Calu3 (cell line): ENCODE measurements at regions of chr9 and their contacts with region 1.

Region 1: GRCh38 chr9:32378993-32379729 is 5.3 kb upstream of the ACO1 start:
- DNase-seq: peak; percentile 55
- H3K4me3 Mint-ChIP-seq: no peak overlapping the region
- H3K27ac Mint-ChIP-seq: no peak overlapping the region
- H3K4me1 Mint-ChIP-seq: no peaks in the 10 kb centered on the region
- H3K27me3 Mint-ChIP-seq: peaks cover 14% of the 10 kb centered on the region
- CTCF ChIP-seq: peak; percentile 56

Region 2: GRCh38 chr9:31700252-31701045 is 678.7 kb before region 1 on chr9:
- CTCF ChIA-PET with region 1: no interaction called
- intact Hi-C with region 1: no loop called
- DNase-seq: no peak
- H3K4me3 Mint-ChIP-seq: no peak overlapping the region
- H3K27ac Mint-ChIP-seq: no peak overlapping the region
- H3K4me1 Mint-ChIP-seq: no peaks in the 10 kb centered on the region
- H3K27me3 Mint-ChIP-seq: no peaks in the 10 kb centered on the region
- CTCF ChIP-seq: no peak

Region 3: GRCh38 chr9:32426278-32426939 is 47.2 kb after region 1 on chr9:
- CTCF ChIA-PET with region 1: interaction called, 17 read pairs
- intact Hi-C with region 1: loop called (anchors 1 kb)
- DNase-seq: peak; percentile 49
- H3K4me3 Mint-ChIP-seq: no peak overlapping the region
- H3K27ac Mint-ChIP-seq: peak overlapping the region; percentile 58
- H3K4me1 Mint-ChIP-seq: peaks cover 25% of the 10 kb centered on the region
- H3K27me3 Mint-ChIP-seq: no peaks in the 10 kb centered on the region
- CTCF ChIP-seq: no peak

Region 4: GRCh38 chr9:32526041-32526706 is 147.0 kb after region 1 on chr9 and contains the start of gene RIGI:
- CTCF ChIA-PET with region 1: interaction called, 29 read pairs
- intact Hi-C with region 1: loop called (anchors 1 kb)
- DNase-seq: peak; percentile 86
- H3K4me3 Mint-ChIP-seq: peak within 1 kb of the TSS; percentile 84
- H3K27ac Mint-ChIP-seq: peak within 1 kb of the TSS; percentile 67
- H3K4me1 Mint-ChIP-seq: peaks cover 23% of the 10 kb centered on the region
- H3K27me3 Mint-ChIP-seq: no peaks in the 10 kb centered on the region
- CTCF ChIP-seq: peak; percentile 38
- total RNA-seq, gene RIGI: 24.8 and 49.0 TPM in 2 replicates

Region 5: DNA sequence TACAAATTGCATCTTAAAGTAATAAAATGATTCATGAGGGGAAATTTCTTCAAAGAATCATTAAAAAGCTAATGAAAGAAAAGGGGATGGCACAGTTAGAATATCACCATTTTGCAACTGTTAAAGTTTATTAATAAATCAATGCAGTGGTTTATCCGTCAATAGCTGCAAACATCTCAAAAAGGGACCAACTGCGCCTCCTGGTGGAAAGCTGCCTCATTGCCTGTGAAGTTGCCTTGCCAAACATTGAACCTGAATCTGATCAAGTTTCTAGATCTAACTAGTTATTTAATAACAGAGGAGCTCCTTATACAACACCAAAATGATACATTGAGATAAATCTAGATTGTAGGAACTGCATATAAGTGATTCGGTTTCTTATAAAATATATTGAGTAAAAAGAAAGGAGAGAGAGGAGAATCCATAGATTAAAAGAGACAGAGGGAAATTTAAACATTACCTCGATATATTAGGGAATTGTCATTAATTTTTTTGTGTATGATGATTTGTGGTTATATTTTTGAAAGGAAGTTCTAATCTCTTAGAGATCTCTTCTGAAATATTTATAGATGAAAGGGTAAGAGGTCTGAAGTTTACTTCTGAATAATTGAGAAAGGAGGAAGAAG is 200.7 kb after region 1 on chr9:
- CTCF ChIA-PET with region 1: interaction called, 86 read pairs
- intact Hi-C with region 1: loop called (anchors 1 kb)
- DNase-seq: peak; percentile 69
- H3K4me3 Mint-ChIP-seq: no peak overlapping the region
- H3K27ac Mint-ChIP-seq: no peak overlapping the region
- H3K4me1 Mint-ChIP-seq: peaks cover 26% of the 10 kb centered on the region
- H3K27me3 Mint-ChIP-seq: no peaks in the 10 kb centered on the region
- CTCF ChIP-seq: peak; percentile 16

Region 6: DNA sequence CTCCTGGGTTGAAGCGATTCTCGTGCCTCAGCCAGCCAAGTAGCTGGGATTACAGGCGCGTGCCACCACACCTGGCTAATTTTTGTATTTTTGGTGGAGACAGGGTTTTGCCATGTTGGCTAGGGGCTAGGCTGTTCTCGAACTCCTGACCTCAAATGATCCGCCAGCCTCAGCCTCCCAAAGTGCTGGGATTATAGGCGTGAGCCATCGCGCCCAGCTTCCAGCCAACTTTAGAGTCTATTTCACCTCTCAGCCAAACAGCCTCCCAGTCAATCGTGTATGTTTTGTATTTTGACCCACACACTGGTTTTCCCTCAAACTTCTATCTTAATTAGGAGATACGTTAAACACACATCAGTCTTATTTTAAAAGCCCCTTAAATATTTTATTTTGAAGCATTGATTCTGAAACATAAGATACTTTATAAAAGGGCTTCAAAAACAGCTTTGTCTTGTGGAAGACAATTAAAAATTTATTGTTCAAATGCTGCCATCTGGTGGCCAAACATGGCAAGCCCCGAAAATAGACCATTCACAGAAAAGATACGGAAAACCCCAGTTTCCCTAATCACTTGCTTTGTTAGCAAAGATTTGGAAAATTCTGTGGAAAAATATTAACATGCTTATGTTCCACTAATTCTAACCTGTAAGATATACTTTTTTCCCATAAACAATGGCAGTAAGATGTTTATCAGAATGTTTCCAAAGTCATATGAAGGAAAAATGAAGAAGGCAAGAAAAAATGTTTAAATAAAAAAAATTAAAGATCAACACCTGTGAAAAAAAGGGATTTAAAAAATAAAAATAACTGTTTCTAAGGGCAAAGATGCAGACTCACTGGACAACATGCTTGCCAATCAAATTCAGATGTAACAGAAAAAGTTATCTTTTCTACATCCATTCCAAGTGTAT is 589.2 kb after region 1 on chr9:
- CTCF ChIA-PET with region 1: interaction called, 8 read pairs
- intact Hi-C with region 1: loop called (anchors 2 kb)
- DNase-seq: peak; percentile 27
- H3K4me3 Mint-ChIP-seq: no peak overlapping the region
- H3K27ac Mint-ChIP-seq: no peak overlapping the region
- H3K4me1 Mint-ChIP-seq: no peaks in the 10 kb centered on the region
- H3K27me3 Mint-ChIP-seq: no peaks in the 10 kb centered on the region
- CTCF ChIP-seq: peak; percentile 18